ENCODE measurements at regions of chr13 and their contacts with region 1.

Region 1: DNA sequence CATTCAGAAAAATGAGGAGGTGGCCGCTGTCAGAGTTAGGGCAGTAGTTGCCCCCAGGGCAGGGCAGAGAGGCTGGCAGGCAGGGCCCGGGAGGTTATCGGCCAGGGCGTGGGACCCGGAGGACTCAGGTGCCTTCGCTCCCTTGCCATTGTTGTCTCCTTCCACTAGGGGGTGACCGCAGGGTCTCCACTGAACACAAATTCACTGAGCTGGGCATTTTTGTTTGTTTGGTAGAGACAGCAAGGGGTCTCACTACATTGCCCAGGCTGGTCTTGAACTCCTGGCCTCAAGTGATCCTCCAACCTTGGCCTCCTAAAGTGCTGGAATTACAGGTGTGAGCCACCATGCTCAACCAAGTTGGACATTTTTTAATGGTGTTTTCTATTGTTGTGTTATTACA is 25.1 kb downstream of the CARS2 start:
- DNase-seq: peak; percentile 38
- H3K4me3 Mint-ChIP-seq: no peak overlapping the region
- H3K27ac Mint-ChIP-seq: no peak overlapping the region
- H3K4me1 Mint-ChIP-seq: no peaks in the 10 kb centered on the region
- H3K27me3 Mint-ChIP-seq: no peaks in the 10 kb centered on the region
- CTCF ChIP-seq: no peak

Region 2: GRCh38 chr13:110705826-110706569 is 25.1 kb after region 1 on chr13 and contains the start of gene CARS2:
- CTCF ChIA-PET with region 1: interaction called, 13 read pairs
- POLR2A ChIA-PET with region 1: interaction called, 4 read pairs
- intact Hi-C with region 1: no loop called
- DNase-seq: peak; percentile 98
- H3K4me3 Mint-ChIP-seq: peak within 1 kb of the TSS; percentile 82
- H3K27ac Mint-ChIP-seq: peak within 1 kb of the TSS; percentile 70
- H3K4me1 Mint-ChIP-seq: peaks cover 21% of the 10 kb centered on the region
- H3K27me3 Mint-ChIP-seq: no peaks in the 10 kb centered on the region
- CTCF ChIP-seq: no peak
- total RNA-seq, gene CARS2: 104 and 121 TPM in 2 replicates

Region 3: GRCh38 chr13:110819203-110820014 is 138.6 kb after region 1 on chr13:
- CTCF ChIA-PET with region 1: interaction called, 13 read pairs
- POLR2A ChIA-PET with region 1: interaction called, 3 read pairs
- intact Hi-C with region 1: loop called (anchors 1 kb)
- DNase-seq: peak; percentile 78
- H3K4me3 Mint-ChIP-seq: no peak overlapping the region
- H3K27ac Mint-ChIP-seq: no peak overlapping the region
- H3K4me1 Mint-ChIP-seq: peaks cover 5% of the 10 kb centered on the region
- H3K27me3 Mint-ChIP-seq: no peaks in the 10 kb centered on the region
- CTCF ChIP-seq: peak; percentile 92

Region 4: DNA sequence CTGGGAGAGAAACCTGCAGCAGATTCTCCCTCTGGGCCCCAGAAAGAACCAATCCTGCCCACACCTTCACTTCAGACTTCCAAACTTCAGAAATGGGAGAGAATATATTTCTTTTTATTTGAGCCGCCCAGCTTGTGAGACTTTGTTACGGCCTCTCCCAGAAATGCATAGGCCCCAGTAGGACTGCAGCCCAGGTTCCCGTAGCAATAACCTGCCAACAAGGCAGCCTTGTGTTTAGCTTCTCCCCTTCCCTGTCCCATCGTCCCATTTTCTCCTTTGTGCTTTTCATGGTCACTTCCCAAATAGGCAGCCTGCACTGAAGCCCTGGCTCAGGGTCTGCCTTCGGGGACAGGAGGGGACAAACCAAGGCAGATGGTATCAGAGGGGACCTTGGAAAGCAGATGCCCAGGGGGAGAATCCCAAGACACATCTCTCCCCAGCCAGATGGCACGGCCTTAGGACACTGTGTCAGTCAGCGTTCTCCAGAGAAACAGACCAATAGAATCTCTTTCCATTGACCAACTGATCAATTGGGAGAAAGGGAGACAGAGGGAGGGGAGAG is 430.6 kb after region 1 on chr13:
- CTCF ChIA-PET with region 1: no interaction called
- POLR2A ChIA-PET with region 1: no interaction called
- intact Hi-C with region 1: no loop called
- DNase-seq: no peak
- H3K4me3 Mint-ChIP-seq: no peak overlapping the region
- H3K27ac Mint-ChIP-seq: no peak overlapping the region
- H3K4me1 Mint-ChIP-seq: no peaks in the 10 kb centered on the region
- H3K27me3 Mint-ChIP-seq: peaks cover 88% of the 10 kb centered on the region
- CTCF ChIP-seq: no peak

Region 5: DNA sequence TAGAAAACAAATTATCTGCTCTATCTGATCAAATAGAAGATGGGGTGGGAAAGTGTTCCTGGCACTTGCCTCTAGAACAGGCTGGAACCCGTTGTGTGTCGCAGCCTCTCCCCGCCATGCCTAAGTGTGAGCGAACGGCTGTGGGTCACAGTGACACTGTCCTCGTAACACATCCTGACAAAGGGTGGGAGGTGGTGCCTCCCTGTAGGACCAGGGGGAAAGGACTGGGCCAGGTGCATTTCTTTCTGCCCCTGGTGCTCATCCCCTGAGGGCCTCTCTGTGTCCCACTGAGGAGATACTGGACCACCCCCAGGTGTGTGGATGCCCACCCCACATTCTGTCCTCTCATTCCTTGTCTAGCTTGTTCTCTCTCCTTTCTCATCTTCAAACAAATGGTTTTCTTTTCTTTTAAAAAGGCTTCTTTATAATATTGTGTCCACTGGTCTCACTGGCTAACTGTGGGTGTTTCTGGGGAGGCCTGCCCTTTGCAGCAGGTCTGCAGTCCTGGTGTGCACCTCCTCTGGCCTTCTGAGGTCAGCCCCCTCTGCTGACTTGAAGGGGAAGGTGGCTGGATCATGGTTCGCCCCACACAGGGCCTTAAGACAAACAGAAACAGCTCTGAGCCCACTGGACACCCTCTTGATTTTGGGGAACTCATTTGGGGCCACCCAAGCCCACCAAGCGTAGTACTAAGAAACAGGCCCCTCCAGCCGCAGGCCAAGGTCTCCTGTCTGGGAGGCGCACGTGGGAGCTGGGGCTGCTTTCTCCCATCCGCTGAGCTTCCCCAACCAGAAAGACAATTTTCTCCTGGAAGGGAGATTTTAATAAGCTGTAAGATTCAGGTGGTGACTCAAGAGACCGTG is 1233.6 kb after region 1 on chr13:
- CTCF ChIA-PET with region 1: no interaction called
- POLR2A ChIA-PET with region 1: no interaction called
- intact Hi-C with region 1: no loop called
- DNase-seq: no peak
- H3K4me3 Mint-ChIP-seq: no peak overlapping the region
- H3K27ac Mint-ChIP-seq: no peak overlapping the region
- H3K4me1 Mint-ChIP-seq: no peaks in the 10 kb centered on the region
- H3K27me3 Mint-ChIP-seq: no peaks in the 10 kb centered on the region
- CTCF ChIP-seq: no peak